HCT116 (cell line): ENCODE measurements at regions of chr17 and their contacts with region 1.

Region 1: DNA sequence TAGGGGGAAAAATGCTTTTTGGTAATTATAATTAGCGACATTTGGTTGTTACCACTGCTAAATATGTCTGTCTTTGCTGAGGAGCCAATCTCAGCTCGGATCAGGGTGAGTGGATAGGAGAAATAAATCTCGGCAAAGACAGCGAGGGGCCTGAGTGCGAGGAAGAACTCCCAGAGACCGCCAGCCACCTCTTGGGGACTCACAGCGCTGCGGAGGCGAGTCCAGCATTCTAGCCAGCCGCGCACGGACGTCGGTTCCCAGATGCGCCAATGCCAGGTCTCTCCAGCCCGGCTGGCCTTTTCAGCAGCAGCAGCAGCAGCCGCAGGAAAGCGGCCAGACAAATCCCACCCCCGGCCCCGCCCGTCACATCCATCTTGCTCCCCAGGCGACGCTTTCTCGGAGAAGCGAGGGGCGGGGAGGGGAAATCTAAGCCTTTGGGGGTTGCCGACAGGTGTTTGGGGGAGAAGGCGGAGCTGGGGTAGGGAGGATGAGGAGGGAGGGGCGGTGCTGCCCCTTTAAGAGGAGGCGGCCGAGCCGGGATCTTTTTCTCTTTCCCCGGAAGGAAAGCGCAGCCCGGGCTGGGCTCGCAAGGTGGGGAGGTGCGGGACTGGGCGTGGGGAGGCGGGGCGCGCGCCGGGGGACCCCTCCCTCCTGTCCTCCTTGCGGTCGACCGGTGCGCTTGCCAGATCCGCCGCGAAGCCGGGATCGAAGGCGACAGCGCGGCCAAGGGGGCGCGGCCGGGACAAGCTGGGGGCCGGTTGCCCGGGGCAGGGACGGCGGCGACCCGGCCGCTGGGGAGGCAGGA is at the start of gene ITGA3:
- DNase-seq: peak; percentile 98
- ATAC-seq: peak; percentile 61
- H3K4me3 ChIP-seq: peak within 1 kb of the TSS; percentile 82 to 88
- H3K27ac ChIP-seq: peak within 1 kb of the TSS; percentile 93
- H3K4me1 ChIP-seq: peaks cover 76 to 86% of the 10 kb centered on the region in 2 experiments
- H3K27me3 ChIP-seq: no peaks in the 10 kb centered on the region
- CTCF ChIP-seq: no peak
- POLR2A ChIP-seq: no peak
- RAD21 ChIP-seq: no peak
- total RNA-seq, gene ITGA3: 392 TPM

Region 2: GRCh38 chr17:50026901-50027630 is 28.6 kb before region 1 on chr17:
- CTCF ChIA-PET with region 1: interaction called, 28 read pairs
- POLR2A ChIA-PET with region 1: interaction called, 99 read pairs
- RAD21 ChIA-PET with region 1: interaction called, 12 to 15 read pairs
- intact Hi-C with region 1: loop called (anchors 1 kb)
- DNase-seq: peak; percentile 77
- ATAC-seq: peak; percentile 62
- H3K4me3 ChIP-seq: peak overlapping the region; percentile 52 to 55
- H3K27ac ChIP-seq: peak overlapping the region; percentile 93
- H3K4me1 ChIP-seq: peaks cover 28 to 44% of the 10 kb centered on the region in 2 experiments
- H3K27me3 ChIP-seq: no peaks in the 10 kb centered on the region
- CTCF ChIP-seq: peak; percentile 94 to 99 (median 98)
- POLR2A ChIP-seq: no peak
- RAD21 ChIP-seq: peak; percentile 97

Region 3: GRCh38 chr17:50035421-50035879 is 20.2 kb before region 1 on chr17:
- CTCF ChIA-PET with region 1: interaction called, 5 read pairs
- POLR2A ChIA-PET with region 1: interaction called, 99 read pairs
- RAD21 ChIA-PET with region 1: interaction called in 1 of 2 experiments, 4 read pairs
- intact Hi-C with region 1: no loop called
- DNase-seq: no peak
- ATAC-seq: peak; percentile 95
- H3K4me3 ChIP-seq: no peak overlapping the region
- H3K27ac ChIP-seq: peak overlapping the region; percentile 13; the same call in 1 of the 2 replicates
- H3K4me1 ChIP-seq: peaks cover 22 to 45% of the 10 kb centered on the region in 2 experiments
- H3K27me3 ChIP-seq: no peaks in the 10 kb centered on the region
- CTCF ChIP-seq: peak in 2 of 3 experiments; percentile 38 to 45; a peak in 4 of 6 replicates
- POLR2A ChIP-seq: no peak
- RAD21 ChIP-seq: no peak

Region 4: DNA sequence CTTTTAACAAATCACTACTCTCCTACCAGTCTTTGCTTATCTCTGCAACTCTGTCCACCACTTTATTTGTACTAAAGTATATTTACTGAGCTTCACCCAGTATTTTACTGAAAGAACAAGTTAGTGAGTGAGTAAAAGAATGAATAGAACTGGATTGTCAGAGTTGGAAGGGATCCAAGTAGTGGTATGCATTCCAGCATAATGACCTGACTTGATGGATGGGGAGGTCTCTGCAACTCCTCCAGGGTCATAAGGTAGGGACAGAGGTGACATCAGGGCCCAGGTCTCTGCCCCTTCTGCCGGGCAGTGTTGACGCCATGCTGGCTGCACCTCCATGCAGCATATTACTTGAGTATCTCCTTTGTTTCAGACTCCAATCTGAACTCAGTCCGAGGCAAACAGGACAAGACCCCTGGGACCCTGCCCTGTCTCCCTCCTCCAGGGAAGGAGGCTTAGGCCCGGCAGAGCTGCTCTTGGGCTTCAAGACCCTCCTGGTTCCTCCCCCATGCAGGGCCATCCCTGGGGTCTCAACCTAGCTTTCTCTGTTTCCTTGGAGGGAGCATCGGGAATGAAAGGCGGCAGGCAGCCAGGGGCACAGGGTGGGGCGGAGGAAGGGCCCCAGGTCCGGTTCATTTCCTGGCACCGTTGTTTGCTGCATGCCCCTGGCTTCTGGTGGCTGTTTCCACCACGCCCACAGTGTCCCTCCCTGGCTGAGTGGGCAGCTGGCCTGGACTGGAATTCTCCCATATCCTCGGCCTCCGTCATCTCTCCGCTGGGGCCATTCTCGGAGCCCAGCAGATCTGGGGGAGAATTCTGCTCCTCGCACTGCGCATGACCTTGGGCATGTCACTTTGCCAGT is 12.1 kb before region 1 on chr17:
- CTCF ChIA-PET with region 1: no interaction called
- POLR2A ChIA-PET with region 1: interaction called, 17 read pairs
- RAD21 ChIA-PET with region 1: no interaction called
- intact Hi-C with region 1: no loop called
- DNase-seq: no peak
- ATAC-seq: no peak
- H3K4me3 ChIP-seq: no peak overlapping the region
- H3K27ac ChIP-seq: no peak overlapping the region
- H3K4me1 ChIP-seq: peaks cover 17 to 36% of the 10 kb centered on the region in 2 experiments
- H3K27me3 ChIP-seq: no peaks in the 10 kb centered on the region
- CTCF ChIP-seq: no peak
- POLR2A ChIP-seq: no peak
- RAD21 ChIP-seq: no peak

Region 5: DNA sequence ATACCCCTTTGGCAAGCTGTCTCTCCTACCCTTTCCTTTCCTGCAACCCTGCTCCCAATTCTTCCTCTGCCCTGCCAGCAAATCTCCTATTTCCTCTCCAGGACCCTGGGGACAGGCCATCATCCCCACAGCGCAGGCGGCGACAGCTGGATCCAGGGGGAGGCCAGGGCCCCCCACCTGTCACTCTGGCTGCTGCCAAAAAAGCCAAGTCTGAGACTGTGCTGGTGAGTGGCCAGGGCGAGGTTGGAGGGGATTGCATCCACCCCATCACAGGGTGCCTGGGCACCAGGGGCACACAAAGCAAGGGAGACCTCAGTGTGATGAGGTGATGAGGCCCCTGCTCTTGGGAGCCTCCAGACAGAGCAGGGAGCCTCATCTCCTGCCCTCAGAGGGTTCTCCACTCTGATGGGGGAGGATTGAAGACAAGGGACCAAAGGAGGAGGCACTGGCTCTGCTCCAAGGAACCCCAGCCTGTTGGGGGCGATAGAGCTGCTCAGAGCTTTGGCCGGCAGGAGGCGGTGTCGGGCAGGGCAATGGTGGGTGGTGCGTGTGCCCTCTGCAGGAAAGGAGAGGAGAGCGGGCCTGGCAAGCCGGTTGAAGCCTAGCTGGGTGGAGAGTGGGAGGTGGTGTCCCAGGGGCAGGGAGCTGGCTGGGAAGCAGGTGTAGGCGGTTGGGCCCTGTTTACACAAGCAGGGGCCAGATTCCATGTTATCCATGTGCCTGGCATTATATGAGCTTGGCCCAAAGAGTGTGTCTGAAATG is 23.9 kb after region 1 on chr17:
- CTCF ChIA-PET with region 1: interaction called, 22 read pairs
- POLR2A ChIA-PET with region 1: interaction called, 7 read pairs
- RAD21 ChIA-PET with region 1: interaction called in 1 of 2 experiments, 3 read pairs
- intact Hi-C with region 1: no loop called
- DNase-seq: peak; percentile 65
- ATAC-seq: peak; percentile 93
- H3K4me3 ChIP-seq: no peak overlapping the region
- H3K27ac ChIP-seq: peak overlapping the region; percentile 42
- H3K4me1 ChIP-seq: peaks cover 6 to 16% of the 10 kb centered on the region in 2 experiments; a peak in 2 of 4 replicates
- H3K27me3 ChIP-seq: no peaks in the 10 kb centered on the region
- CTCF ChIP-seq: peak; percentile 100
- POLR2A ChIP-seq: no peak
- RAD21 ChIP-seq: peak; percentile 83

Region 6: DNA sequence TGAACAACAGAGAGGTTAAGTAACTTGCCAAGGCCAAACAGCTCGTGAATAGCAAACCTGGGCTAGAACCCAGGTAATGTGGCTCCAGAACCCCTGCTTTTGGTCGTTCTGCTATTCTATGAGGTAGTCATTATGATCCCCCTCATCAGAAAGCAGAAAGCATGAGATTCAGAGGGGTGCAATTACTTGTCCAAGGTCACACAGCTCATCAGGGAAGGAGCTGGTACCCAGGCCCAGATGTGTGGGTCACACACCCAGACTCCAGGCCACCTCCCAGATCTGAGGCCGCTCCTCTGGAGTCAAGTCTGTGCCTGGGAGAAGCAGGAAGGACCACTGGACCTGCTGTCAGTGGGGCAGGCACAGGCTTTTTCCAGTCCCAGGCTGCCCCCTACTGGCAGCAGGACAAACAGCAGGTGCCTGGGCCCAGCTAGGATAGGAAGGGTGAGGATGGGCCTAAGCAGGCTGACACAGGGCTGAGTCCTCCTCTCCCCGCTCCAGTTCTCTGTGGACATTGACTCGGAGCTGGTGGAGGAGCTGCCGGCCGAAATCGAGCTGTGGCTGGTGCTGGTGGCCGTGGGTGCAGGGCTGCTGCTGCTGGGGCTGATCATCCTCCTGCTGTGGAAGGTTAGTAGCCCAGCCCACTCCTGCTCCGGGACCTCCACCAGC is 31.8 kb after region 1 on chr17:
- CTCF ChIA-PET with region 1: interaction called, 17 read pairs
- POLR2A ChIA-PET with region 1: interaction called, 18 read pairs
- RAD21 ChIA-PET with region 1: interaction called in 1 of 2 experiments, 5 read pairs
- intact Hi-C with region 1: loop called (anchors 2 kb)
- DNase-seq: peak; percentile 57
- ATAC-seq: peak; percentile 93
- H3K4me3 ChIP-seq: no peak overlapping the region
- H3K27ac ChIP-seq: no peak overlapping the region; the same call in 1 of the 2 replicates
- H3K4me1 ChIP-seq: peaks cover 0 to 4% of the 10 kb centered on the region in 2 experiments; a peak in 2 of 4 replicates
- H3K27me3 ChIP-seq: no peaks in the 10 kb centered on the region
- CTCF ChIP-seq: peak; percentile 92 to 100 (median 99)
- POLR2A ChIP-seq: no peak
- RAD21 ChIP-seq: peak; percentile 98